Activated CD8-positive, alpha-beta T cell treated with anti-CD3 and anti-CD28 coated beads for 36 hours (primary cell): ENCODE measurements at regions of chr3 and their contacts with region 1.

Region 1: DNA sequence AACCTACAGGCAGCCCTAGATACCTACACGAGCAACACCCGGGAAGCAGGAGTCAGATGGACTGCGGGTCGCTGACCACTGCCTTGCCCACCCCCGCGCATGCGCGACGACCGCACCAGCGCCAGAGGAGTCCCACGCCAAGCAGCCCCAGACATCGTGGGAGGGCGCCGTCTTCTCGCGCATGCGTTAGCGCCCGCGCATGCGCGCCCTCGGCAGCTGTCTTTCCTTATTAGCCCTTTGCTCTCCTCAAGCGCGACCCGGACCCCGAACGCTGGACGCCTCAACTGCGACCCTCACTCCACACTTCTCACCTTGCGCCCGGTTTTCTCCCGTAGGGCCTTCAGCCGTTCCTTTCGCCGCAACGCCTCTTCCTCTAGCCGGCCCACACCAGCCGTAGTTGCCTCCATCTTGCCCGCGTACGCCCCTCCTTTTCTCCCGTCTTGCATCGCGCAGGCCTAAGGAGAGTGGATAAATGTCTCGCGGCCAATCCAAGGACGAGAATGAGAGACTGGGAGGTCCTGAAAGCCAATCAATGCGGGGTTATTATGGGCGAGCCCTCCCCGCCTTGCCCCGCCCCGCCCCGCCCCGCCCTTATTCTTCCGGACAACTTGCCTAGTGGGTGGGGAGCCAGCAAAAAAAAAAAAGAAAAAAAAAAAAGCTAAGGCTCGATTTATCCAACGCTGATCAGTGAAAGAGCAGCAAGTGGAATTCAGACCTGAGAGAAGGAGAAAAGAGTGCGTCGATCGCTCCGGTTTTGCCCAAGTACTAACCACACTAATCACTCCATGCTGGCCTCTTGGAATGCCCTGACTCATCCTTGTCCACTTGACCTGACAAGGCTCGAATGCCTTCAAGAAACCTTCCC is at the start of gene CCDC12:
- DNase-seq: peak; percentile 96
- ATAC-seq: peak; percentile 83
- H3K4me3 Mint-ChIP-seq: peak within 1 kb of the TSS; percentile 90
- H3K27ac Mint-ChIP-seq: peak within 1 kb of the TSS; percentile 98
- H3K4me1 Mint-ChIP-seq: peaks cover 59% of the 10 kb centered on the region
- H3K27me3 Mint-ChIP-seq: no peaks in the 10 kb centered on the region
- CTCF ChIP-seq: no peak
- total RNA-seq, gene CCDC12: 51.2 to 51.6 TPM

Region 2: DNA sequence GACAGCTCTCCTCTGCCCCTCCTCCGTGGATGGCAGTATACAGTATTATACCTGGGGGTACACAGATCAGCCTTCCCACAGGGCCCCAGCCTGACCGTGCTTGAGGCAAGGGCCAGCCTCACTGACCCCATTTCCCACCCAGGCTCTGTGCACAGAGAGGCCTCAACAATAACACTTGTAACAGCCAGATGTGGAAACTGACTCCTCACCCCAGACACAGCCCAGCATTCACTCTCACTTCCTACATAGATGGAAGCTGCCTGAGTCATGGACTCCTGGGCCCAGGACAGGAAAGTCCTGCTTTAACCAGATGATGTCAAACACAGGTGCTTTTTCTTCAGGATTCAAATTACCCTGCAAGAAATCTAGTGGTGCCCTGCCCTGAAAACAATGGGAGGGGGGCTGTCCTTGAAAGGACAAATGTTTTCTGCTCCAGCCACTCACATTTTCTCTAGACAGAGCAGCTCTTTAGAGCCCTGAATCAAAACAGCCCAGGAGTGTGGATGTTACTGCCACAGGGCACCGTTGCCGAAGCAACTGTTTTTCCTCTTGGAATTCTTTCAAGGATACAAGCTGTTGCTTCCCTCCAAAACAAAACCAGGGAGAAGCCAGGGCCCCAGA is 16.4 kb before region 1 on chr3:
- CTCF ChIA-PET with region 1: interaction called, 3 read pairs
- POLR2A ChIA-PET with region 1: interaction called, 40 read pairs
- intact Hi-C with region 1: no loop called
- DNase-seq: peak; percentile 28
- ATAC-seq: no peak
- H3K4me3 Mint-ChIP-seq: peak overlapping the region; percentile 46
- H3K27ac Mint-ChIP-seq: peak overlapping the region; percentile 96
- H3K4me1 Mint-ChIP-seq: peaks cover 77% of the 10 kb centered on the region
- H3K27me3 Mint-ChIP-seq: no peaks in the 10 kb centered on the region
- CTCF ChIP-seq: no peak

Region 3: GRCh38 chr3:46987743-46988401 is 11.3 kb after region 1 on chr3:
- CTCF ChIA-PET with region 1: no interaction called
- POLR2A ChIA-PET with region 1: interaction called, 21 read pairs
- intact Hi-C with region 1: no loop called
- DNase-seq: peak; percentile 92
- ATAC-seq: peak; percentile 98
- H3K4me3 Mint-ChIP-seq: peak overlapping the region; percentile 67
- H3K27ac Mint-ChIP-seq: peak overlapping the region; percentile 89
- H3K4me1 Mint-ChIP-seq: peaks cover 63% of the 10 kb centered on the region
- H3K27me3 Mint-ChIP-seq: no peaks in the 10 kb centered on the region
- CTCF ChIP-seq: no peak

Region 4: GRCh38 chr3:47009225-47010110 is 32.9 kb after region 1 on chr3:
- CTCF ChIA-PET with region 1: no interaction called
- POLR2A ChIA-PET with region 1: interaction called, 11 read pairs
- intact Hi-C with region 1: no loop called
- DNase-seq: peak; percentile 89
- ATAC-seq: peak; percentile 97
- H3K4me3 Mint-ChIP-seq: peak overlapping the region; percentile 68
- H3K27ac Mint-ChIP-seq: peak overlapping the region; percentile 85
- H3K4me1 Mint-ChIP-seq: peaks cover 5% of the 10 kb centered on the region
- H3K27me3 Mint-ChIP-seq: no peaks in the 10 kb centered on the region
- CTCF ChIP-seq: no peak